ENCODE measurements at regions of chr10 and their contacts with region 1.

Region 1: DNA sequence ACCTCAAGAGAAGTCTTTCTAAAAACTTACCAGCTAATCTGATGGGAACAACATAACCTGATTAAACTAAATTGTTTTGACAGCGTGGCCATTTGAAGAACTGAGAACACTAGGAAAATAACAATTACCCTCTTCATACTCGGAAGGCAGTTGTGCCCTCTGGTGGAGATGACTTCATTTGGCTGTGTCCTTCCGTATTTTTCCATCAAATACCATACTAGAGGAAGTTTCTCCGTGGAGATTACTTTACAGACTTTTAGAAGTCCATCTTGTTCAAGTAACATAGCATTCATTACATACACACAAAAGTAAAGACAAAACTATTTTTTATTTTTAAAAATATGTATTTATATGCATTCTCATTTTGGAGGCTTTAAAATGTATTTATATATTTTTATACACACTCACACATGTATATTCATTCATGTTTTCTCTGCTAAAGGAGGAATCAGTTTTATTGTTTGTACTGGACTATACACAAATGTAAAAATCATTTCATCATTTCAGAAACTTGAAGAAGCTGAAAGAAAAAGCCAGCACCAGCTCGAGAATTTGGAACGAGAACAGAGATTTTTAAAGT is 25.2 kb downstream of the SMNDC1 start:
- DNase-seq: peak in 2 of 4 donors; percentile 65 to 83
- ATAC-seq: peak; percentile 95
- H3K4me3 ChIP-seq: no peak overlapping the region
- H3K27ac ChIP-seq: no peak overlapping the region
- H3K4me1 ChIP-seq: peaks cover 0 to 11% of the 10 kb centered on the region in 2 donors
- H3K27me3 ChIP-seq: no peaks in the 10 kb centered on the region
- CTCF ChIP-seq: peak; percentile 51 to 64

Region 2: DNA sequence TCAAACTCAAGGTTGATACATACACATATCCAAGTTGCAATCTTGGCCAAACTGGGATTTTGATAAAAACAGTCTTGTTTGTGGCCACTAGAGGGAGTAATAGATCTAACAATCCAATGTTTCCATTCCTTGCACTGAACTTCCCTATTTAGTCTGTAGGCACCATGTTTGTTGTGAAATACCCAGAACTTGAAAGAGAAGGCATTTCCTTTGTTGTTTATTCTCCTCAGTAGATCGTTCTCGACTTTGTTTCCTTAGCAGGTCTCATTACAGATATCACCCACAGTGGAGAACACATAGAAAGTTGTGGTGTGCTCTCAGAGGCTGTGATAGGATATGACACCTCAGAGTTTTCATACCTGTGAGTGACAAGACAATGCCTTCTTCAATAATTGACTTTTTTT is 142.4 kb before region 1 on chr10:
- intact Hi-C with region 1: loop called in 1 of 2 experiments (anchors 5 kb)
- DNase-seq: peak in 2 of 4 donors; percentile 69 to 79
- ATAC-seq: peak; percentile 93
- H3K4me3 ChIP-seq: no peak overlapping the region
- H3K27ac ChIP-seq: peak overlapping the region; percentile 63 to 82
- H3K4me1 ChIP-seq: peaks cover 5 to 34% of the 10 kb centered on the region in 2 donors
- H3K27me3 ChIP-seq: no peaks in the 10 kb centered on the region
- CTCF ChIP-seq: peak; percentile 77 to 82

Region 3: DNA sequence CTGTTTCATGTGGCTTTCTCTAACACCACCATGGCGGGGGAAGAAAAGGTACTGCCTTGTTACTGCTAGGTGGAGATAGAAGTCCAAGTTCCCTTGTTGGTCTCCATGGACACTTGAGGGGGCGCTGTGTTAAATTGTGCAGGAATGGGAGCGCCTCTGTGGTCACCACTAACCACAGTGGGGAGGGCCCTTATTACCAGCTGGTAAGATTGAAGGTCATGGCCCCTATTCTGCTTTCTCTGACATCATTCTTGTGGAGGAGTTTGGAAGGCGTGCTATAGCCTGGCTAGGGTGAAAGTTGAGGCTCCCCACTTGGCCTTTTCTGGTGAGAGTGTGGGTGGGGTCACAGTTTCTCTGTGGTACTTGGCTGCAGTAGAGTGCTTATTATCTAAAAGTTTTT is 86.9 kb before region 1 on chr10:
- intact Hi-C with region 1: no loop called
- DNase-seq: no peak
- ATAC-seq: no peak
- H3K4me3 ChIP-seq: no peak overlapping the region
- H3K27ac ChIP-seq: no peak overlapping the region
- H3K4me1 ChIP-seq: no peaks in the 10 kb centered on the region
- H3K27me3 ChIP-seq: no peaks in the 10 kb centered on the region
- CTCF ChIP-seq: no peak

Region 4: DNA sequence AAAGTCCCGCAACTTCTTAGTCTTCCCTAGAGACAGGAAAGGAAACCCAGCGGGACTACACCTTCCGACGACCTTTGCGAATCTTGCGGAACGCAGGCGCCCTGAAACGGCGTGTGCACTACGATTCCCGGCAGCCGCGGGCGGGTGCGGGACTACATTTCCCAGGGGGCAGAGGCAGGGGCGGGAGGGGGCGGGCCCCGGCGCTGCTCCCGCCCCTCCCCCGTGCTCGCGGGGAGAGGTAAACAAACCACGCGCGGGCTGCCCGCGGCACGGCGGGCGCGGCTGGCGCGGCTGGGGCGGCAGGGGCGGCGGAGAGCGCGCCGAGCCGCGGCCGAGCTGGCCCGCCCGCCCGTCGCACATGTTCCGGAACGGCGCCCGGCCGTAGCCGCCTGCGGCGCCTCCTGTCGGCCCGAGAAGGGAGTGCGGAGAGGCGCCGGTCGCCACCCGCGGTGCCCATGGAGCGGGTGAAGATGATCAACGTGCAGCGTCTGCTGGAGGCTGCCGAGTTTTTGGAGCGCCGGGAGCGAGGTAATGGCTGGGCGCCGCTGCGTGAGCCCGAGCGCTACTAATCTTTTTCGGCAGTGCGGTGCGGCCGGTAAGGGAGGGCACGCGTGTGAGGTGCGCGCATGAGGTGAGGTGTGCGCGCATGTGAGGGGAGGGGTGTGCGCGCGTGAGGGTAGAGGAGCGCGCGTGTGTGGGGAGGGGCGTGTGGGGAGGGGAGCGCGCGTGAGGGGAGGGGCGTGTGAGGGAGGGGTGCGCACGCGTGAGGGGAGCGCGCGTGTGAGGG is 53.5 kb before region 1 on chr10:
- intact Hi-C with region 1: loop called in 1 of 2 experiments (anchors 10 kb)
- DNase-seq: peak; percentile 92 to 96 (median 94)
- ATAC-seq: peak; percentile 71
- H3K4me3 ChIP-seq: peak overlapping the region; percentile 58 to 84
- H3K27ac ChIP-seq: peak overlapping the region; percentile 91 to 92
- H3K4me1 ChIP-seq: peaks cover 0 to 37% of the 10 kb centered on the region in 2 donors
- H3K27me3 ChIP-seq: no peaks in the 10 kb centered on the region
- CTCF ChIP-seq: peak; percentile 54 to 77

Measured in left lung (tissue), 14 donors.